GM12878 (cell line): ENCODE measurements at regions of chr10 and their contacts with region 1.

Region 1: DNA sequence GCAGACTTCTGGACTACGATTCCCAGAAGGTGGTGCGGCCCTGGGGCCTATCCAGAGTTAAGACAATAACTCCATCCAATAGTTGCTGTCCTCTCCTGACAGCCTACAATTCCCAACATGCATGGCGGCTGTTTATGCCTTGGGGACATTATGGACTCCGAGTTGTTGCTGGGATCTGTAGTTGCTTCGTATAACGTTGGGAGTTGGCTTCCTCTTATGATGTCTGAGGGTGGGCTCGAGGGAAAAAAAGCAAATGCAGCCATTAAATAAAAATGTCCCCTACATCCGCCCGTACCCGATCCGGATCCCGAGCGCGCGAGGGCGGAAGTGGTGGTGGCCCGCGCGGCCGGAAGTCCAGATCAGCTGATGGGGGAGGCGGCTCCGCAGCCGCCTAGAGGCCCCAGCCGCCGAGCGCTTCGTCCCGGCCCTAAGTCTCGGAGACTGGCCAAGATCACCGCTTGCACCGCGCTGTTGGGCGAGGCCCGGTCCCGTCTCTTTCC is at the start of gene ZSWIM8:
- DNase-seq: peak; percentile 84
- ATAC-seq: peak; percentile 89
- H3K4me3 ChIP-seq: peak within 1 kb of the TSS; percentile 91
- H3K27ac ChIP-seq: peak within 1 kb of the TSS; percentile 85
- H3K4me1 ChIP-seq: peaks cover 10% of the 10 kb centered on the region
- H3K27me3 ChIP-seq: no peaks in the 10 kb centered on the region
- CTCF ChIP-seq: no peak
- EP300 ChIP-seq: no peak
- POLR2A ChIP-seq: peak; percentile 86
- RAD21 ChIP-seq: no peak
- polyA plus RNA-seq, gene ZSWIM8: 7.8 to 8.5 TPM

Region 2: DNA sequence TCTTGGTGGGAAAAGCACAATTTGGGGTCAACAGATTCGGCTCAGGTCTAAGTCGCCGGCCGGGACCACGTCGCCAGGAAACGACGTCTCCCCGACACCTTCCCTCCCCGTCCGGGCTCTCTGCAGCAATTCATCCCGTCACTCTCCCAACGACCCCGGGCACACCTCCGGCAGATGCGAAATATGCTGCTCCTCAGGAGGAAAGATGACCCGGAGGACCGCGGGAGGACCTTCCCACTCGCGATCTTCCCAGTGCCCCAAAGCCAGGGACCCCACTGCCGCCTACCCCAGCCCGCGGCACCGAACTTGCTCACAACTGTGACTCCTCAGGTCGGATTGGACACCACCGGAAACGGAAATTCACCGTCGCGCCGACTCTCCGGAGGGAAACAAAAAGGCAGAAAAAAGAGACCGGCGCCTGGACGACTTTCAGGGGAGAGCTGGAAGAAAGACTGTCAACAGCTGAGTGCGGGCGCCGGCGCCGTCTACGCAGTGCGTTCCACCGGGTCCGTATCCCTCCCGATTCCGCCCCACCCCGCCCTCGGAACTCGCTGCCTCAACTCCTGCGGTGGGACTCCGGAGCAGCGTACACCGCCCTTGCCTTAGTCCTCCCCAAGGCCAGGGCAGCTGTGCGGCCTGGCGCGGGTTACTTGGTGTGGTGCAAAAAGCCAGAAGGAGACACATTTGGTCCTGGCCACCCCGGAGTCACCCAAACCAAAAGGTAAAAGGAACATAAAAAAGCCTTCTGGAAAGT is 54.9 kb before region 1 on chr10:
- CTCF ChIA-PET with region 1: interaction called, 5 read pairs
- POLR2A ChIA-PET with region 1: no interaction called
- RAD21 ChIA-PET with region 1: interaction called, 13 read pairs
- SMC1A ChIA-PET with region 1: interaction called, 6 read pairs
- in situ Hi-C with region 1: no loop called
- intact Hi-C with region 1: no loop called
- DNase-seq: peak; percentile 68
- ATAC-seq: peak; percentile 95
- H3K4me3 ChIP-seq: peak overlapping the region; percentile 80
- H3K27ac ChIP-seq: peak overlapping the region; percentile 67
- H3K4me1 ChIP-seq: no peaks in the 10 kb centered on the region; the same call in 1 of the 2 replicates
- H3K27me3 ChIP-seq: no peaks in the 10 kb centered on the region
- CTCF ChIP-seq: no peak
- EP300 ChIP-seq: no peak
- POLR2A ChIP-seq: peak; percentile 92
- RAD21 ChIP-seq: no peak

Region 3: GRCh38 chr10:73759512-73760115 is 25.7 kb before region 1 on chr10:
- CTCF ChIA-PET with region 1: interaction called, 9 read pairs
- POLR2A ChIA-PET with region 1: interaction called, 7 read pairs
- RAD21 ChIA-PET with region 1: interaction called, 10 read pairs
- SMC1A ChIA-PET with region 1: interaction called, 15 read pairs
- in situ Hi-C with region 1: no loop called
- intact Hi-C with region 1: no loop called
- DNase-seq: no peak
- ATAC-seq: peak; percentile 76
- H3K4me3 ChIP-seq: no peak overlapping the region
- H3K27ac ChIP-seq: peak overlapping the region; percentile 84
- H3K4me1 ChIP-seq: peaks cover 55% of the 10 kb centered on the region
- H3K27me3 ChIP-seq: no peaks in the 10 kb centered on the region
- CTCF ChIP-seq: no peak
- EP300 ChIP-seq: no peak
- POLR2A ChIP-seq: no peak
- RAD21 ChIP-seq: no peak

Region 4: GRCh38 chr10:73803680-73804286 is 18.5 kb after region 1 on chr10:
- CTCF ChIA-PET with region 1: interaction called, 9 read pairs
- POLR2A ChIA-PET with region 1: interaction called, 25 read pairs
- RAD21 ChIA-PET with region 1: interaction called, 21 read pairs
- SMC1A ChIA-PET with region 1: interaction called, 31 read pairs
- in situ Hi-C with region 1: no loop called
- intact Hi-C with region 1: no loop called
- DNase-seq: peak; percentile 81
- ATAC-seq: peak; percentile 95
- H3K4me3 ChIP-seq: no peak overlapping the region
- H3K27ac ChIP-seq: peak overlapping the region; percentile 97
- H3K4me1 ChIP-seq: peaks cover 25% of the 10 kb centered on the region
- H3K27me3 ChIP-seq: no peaks in the 10 kb centered on the region
- CTCF ChIP-seq: no peak
- EP300 ChIP-seq: 0 out of 4 replicates have a peak, but pooled peaks of 1 of the 2 experiments have one; percentile 48
- POLR2A ChIP-seq: 0 out of 2 replicates have a peak, but pooled peaks have one; percentile 32
- RAD21 ChIP-seq: no peak

Region 5: GRCh38 chr10:73894245-73894971 is 109.1 kb after region 1 on chr10:
- CTCF ChIA-PET with region 1: no interaction called
- POLR2A ChIA-PET with region 1: no interaction called
- RAD21 ChIA-PET with region 1: no interaction called
- SMC1A ChIA-PET with region 1: no interaction called
- in situ Hi-C with region 1: no loop called
- intact Hi-C with region 1: no loop called
- DNase-seq: no peak
- ATAC-seq: peak; percentile 87
- H3K4me3 ChIP-seq: no peak overlapping the region
- H3K27ac ChIP-seq: no peak overlapping the region
- H3K4me1 ChIP-seq: no peaks in the 10 kb centered on the region
- H3K27me3 ChIP-seq: no peaks in the 10 kb centered on the region
- CTCF ChIP-seq: no peak
- EP300 ChIP-seq: no peak
- POLR2A ChIP-seq: no peak
- RAD21 ChIP-seq: no peak

Region 6: DNA sequence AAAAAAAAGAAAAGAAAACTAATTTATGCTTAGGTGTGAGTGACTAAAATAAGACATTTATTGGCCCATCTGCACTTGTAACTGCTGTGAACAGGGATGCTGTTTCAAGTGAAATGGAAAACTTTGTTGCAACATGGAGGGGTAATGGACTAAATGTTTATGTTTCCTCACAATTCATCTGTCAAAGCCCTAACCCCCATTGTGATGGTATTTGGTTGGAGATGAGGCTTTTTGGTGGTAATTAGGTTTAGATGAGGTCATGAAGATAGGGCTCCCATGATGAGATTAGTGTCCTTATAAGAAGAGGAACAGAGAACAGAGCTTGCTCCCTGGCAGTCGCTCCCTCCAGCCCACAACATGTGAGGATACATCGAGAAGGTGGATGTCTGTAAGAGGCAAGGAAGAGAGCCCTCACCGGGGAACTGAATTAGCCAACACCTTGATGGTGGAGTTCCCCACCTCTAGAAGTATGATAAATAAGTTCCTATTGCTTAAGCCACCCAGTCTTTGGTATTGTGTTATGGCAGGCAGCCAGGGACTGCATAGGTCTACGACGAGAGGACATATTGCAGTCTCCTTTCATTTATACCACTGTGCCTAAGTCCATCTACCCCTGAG is 184.1 kb after region 1 on chr10:
- CTCF ChIA-PET with region 1: no interaction called
- POLR2A ChIA-PET with region 1: no interaction called
- RAD21 ChIA-PET with region 1: no interaction called
- SMC1A ChIA-PET with region 1: no interaction called
- in situ Hi-C with region 1: no loop called
- intact Hi-C with region 1: no loop called
- DNase-seq: no peak
- ATAC-seq: peak; percentile 39; the same call in 2 of the 3 replicates
- H3K4me3 ChIP-seq: no peak overlapping the region
- H3K27ac ChIP-seq: no peak overlapping the region
- H3K4me1 ChIP-seq: peaks cover 7% of the 10 kb centered on the region
- H3K27me3 ChIP-seq: no peaks in the 10 kb centered on the region
- CTCF ChIP-seq: no peak
- EP300 ChIP-seq: no peak
- POLR2A ChIP-seq: no peak
- RAD21 ChIP-seq: no peak